ENCODE measurements at regions of chr15 and their contacts with region 1.

Region 1: GRCh38 chr15:84761607-84762131 is 13.3 kb downstream of the ZNF592 start:
- DNase-seq: peak in 6 of 9 donors; percentile 14 to 42 (median 31)
- ATAC-seq: peak; percentile 37
- H3K4me3 ChIP-seq: no peak overlapping the region
- H3K4me3 Mint-ChIP-seq: no peak overlapping the region
- H3K27ac ChIP-seq: peak overlapping the region; percentile 51
- H3K27ac Mint-ChIP-seq: no peak overlapping the region
- H3K4me1 ChIP-seq: peaks cover 24 to 36% of the 10 kb centered on the region in 2 donors
- H3K4me1 Mint-ChIP-seq: peaks cover 5 to 24% (median 12%) of the 10 kb centered on the region in 7 donors
- H3K27me3 ChIP-seq: no peaks in the 10 kb centered on the region
- H3K27me3 Mint-ChIP-seq: no peaks in the 10 kb centered on the region

Region 2: DNA sequence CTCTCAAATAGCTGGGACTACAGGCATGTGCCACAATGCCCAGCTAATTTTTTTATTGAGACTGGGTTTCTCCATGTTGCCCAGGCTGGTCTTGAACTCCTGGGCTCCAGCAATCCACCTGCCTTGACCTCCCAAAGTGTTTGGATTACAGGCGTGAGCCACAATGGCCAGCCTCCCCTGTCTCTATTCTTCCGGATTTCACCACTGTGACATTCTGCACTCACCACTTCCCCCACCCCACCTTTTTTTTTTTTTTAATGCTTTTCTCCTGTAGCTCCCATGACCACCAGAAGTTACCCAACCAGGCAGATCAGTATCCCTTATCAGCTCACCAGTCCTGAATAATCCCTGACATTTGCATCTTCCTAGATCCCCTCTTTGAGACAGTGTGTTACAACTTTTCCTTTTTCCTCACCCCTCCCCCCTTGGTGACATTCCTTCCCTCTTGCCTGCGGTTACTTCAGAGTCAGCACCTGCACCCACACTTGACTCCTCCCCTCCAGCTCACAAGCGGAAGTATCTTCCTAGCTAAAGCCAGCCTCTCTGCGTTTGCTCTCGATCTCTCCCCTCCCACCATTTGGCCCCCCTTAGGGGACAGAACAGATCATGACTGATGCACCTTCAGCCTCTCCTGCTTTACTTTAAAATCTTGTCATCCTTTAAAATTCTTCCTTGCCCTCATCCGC is 26.7 kb before region 1 on chr15:
- CTCF ChIA-PET with region 1: no interaction called
- POLR2A ChIA-PET with region 1: interaction called, 5 read pairs
- intact Hi-C with region 1: loop called in 1 of 2 experiments (anchors 1 kb)
- DNase-seq: peak in 8 of 9 donors; percentile 69 to 83 (median 78)
- ATAC-seq: peak; percentile 85
- H3K4me3 ChIP-seq: peak overlapping the region; percentile 56
- H3K4me3 Mint-ChIP-seq: peak overlapping the region; percentile 71 to 89 (median 84)
- H3K27ac ChIP-seq: peak overlapping the region; percentile 67
- H3K27ac Mint-ChIP-seq: peak overlapping the region; percentile 89 to 96 (median 93)
- H3K4me1 ChIP-seq: peaks cover 34 to 47% of the 10 kb centered on the region in 2 donors
- H3K4me1 Mint-ChIP-seq: peaks cover 36 to 62% (median 50%) of the 10 kb centered on the region in 7 donors
- H3K27me3 ChIP-seq: no peaks in the 10 kb centered on the region
- H3K27me3 Mint-ChIP-seq: no peaks in the 10 kb centered on the region